ENCODE measurements at regions of chr12 and their contacts with region 1.

Region 1: GRCh38 chr12:112012775-112013600 is at the starts of genes ERP29 and TMEM116:
- DNase-seq: peak; percentile 100
- ATAC-seq: peak; percentile 96
- total RNA-seq, gene ERP29: 46.5 TPM
- total RNA-seq, gene TMEM116: 42.4 TPM

Region 2: GRCh38 chr12:111942557-111942956 is 70.4 kb before region 1 on chr12:
- intact Hi-C with region 1: loop called (anchors 5 kb)
- DNase-seq: no peak
- ATAC-seq: no peak

Measured in Right ventricle myocardium superior (tissue), 1 donor.